Activated CD4-positive, alpha-beta T cell treated with anti-CD3 and anti-CD28 coated beads for 36 hours (primary cell): ENCODE measurements at regions of chr1 and their contacts with region 1.

Region 1: GRCh38 chr1:32817159-32817814 is at the starts of genes S100PBP and YARS1:
- DNase-seq: peak; percentile 100
- ATAC-seq: peak; percentile 96
- H3K4me3 Mint-ChIP-seq: peak within 1 kb of the TSS; percentile 97
- H3K27ac Mint-ChIP-seq: peak within 1 kb of the TSS; percentile 99
- H3K4me1 Mint-ChIP-seq: peaks cover 48% of the 10 kb centered on the region
- H3K27me3 Mint-ChIP-seq: no peaks in the 10 kb centered on the region
- total RNA-seq, gene S100PBP: 27.9 to 34.3 TPM
- total RNA-seq, gene YARS1: 259 to 309 TPM

Region 2: GRCh38 chr1:32013386-32014198 is 803.7 kb before region 1 on chr1 and contains the start of gene KHDRBS1:
- CTCF ChIA-PET with region 1: no interaction called
- POLR2A ChIA-PET with region 1: no interaction called
- intact Hi-C with region 1: loop called in 1 of 2 experiments (anchors 1 kb)
- DNase-seq: peak; percentile 99
- ATAC-seq: peak; percentile 90
- H3K4me3 Mint-ChIP-seq: peak within 1 kb of the TSS; percentile 97
- H3K27ac Mint-ChIP-seq: peak within 1 kb of the TSS; percentile 95
- H3K4me1 Mint-ChIP-seq: peaks cover 27% of the 10 kb centered on the region
- H3K27me3 Mint-ChIP-seq: no peaks in the 10 kb centered on the region
- total RNA-seq, gene KHDRBS1: 198 to 206 TPM

Region 3: DNA sequence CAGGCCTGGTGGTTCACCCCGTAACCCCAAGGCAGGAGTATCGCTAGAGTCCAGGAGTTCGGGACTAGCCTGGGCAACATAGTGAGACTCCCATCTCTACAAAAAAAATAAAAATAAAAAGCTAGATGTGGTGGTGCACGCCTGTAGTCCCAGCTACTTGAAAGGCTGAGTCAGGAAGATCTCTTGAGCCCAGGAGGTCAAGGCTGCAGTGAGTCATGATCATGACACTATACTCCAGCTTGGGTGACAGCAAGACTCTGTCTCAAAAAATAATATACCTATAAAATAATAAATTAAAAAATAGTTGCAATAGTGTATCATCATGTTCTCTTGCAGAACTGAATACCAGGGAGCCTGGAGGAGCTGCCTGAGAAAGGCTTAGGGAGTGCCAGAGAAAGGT is 764.4 kb before region 1 on chr1:
- CTCF ChIA-PET with region 1: no interaction called
- POLR2A ChIA-PET with region 1: no interaction called
- intact Hi-C with region 1: no loop called
- DNase-seq: no peak
- ATAC-seq: no peak
- H3K4me3 Mint-ChIP-seq: no peak overlapping the region
- H3K27ac Mint-ChIP-seq: no peak overlapping the region
- H3K4me1 Mint-ChIP-seq: peaks cover 4% of the 10 kb centered on the region
- H3K27me3 Mint-ChIP-seq: no peaks in the 10 kb centered on the region

Region 4: DNA sequence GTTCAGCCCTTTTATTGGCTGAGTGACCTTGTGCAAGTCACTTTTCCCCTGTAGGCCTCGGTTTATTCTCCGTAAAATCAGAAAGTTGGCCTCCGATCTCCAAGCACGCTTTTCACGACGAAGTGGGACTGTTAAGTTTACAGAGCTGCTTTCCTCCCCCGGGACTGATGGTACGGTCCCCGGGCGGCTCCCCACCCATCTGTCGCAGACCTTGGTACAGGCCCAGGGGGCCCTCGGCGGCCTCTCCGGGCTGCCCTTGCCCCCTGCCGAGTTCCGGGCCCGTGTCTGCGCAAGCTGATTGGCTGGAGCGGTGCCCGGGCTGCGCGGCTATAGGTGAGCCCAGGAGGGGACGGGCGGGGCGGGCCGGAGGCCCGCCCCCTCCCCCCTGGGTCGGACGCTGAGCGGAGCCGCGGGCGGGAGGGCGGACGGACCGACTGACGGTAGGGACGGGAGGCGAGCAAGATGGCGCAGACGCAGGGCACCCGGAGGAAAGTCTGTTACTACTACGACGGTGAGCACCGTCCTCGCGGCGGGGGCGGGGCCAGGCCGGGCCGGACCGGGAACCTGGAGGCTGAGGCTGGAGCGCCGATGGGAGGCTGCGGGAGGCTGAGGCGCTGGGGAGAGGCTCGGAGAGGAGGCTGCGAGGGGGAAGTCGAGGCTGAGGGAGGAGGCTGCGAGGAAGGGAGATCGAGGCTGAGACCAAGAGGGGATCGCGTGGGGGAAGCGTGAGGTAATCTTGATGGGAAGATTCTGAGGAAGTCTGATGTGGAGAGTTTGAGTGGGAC is 525.4 kb before region 1 on chr1 and contains the start of gene HDAC1:
- CTCF ChIA-PET with region 1: no interaction called
- POLR2A ChIA-PET with region 1: no interaction called
- intact Hi-C with region 1: loop called in 1 of 2 experiments (anchors 5 kb)
- DNase-seq: peak; percentile 99
- ATAC-seq: peak; percentile 98
- H3K4me3 Mint-ChIP-seq: peak within 1 kb of the TSS; percentile 100
- H3K27ac Mint-ChIP-seq: peak within 1 kb of the TSS; percentile 99
- H3K4me1 Mint-ChIP-seq: peaks cover 43% of the 10 kb centered on the region
- H3K27me3 Mint-ChIP-seq: no peaks in the 10 kb centered on the region
- total RNA-seq, gene HDAC1: 132 to 146 TPM

Region 5: GRCh38 chr1:32394141-32394889 is 423.0 kb before region 1 on chr1 and contains the start of gene BSDC1:
- CTCF ChIA-PET with region 1: no interaction called
- POLR2A ChIA-PET with region 1: no interaction called
- intact Hi-C with region 1: loop called in 1 of 2 experiments (anchors 1 kb)
- DNase-seq: peak; percentile 100
- ATAC-seq: peak; percentile 98
- H3K4me3 Mint-ChIP-seq: peak within 1 kb of the TSS; percentile 83
- H3K27ac Mint-ChIP-seq: peak within 1 kb of the TSS; percentile 98
- H3K4me1 Mint-ChIP-seq: peaks cover 19% of the 10 kb centered on the region
- H3K27me3 Mint-ChIP-seq: no peaks in the 10 kb centered on the region
- total RNA-seq, gene BSDC1: 29.4 to 36.9 TPM

Region 6: GRCh38 chr1:32964461-32965250 is 147.4 kb after region 1 on chr1 and contains the start of gene RNF19B:
- CTCF ChIA-PET with region 1: no interaction called
- POLR2A ChIA-PET with region 1: interaction called, 16 read pairs
- intact Hi-C with region 1: loop called in 1 of 2 experiments (anchors 1 kb)
- DNase-seq: peak; percentile 98
- ATAC-seq: peak; percentile 96
- H3K4me3 Mint-ChIP-seq: peak within 1 kb of the TSS; percentile 77
- H3K27ac Mint-ChIP-seq: peak within 1 kb of the TSS; percentile 84
- H3K4me1 Mint-ChIP-seq: peaks cover 59% of the 10 kb centered on the region
- H3K27me3 Mint-ChIP-seq: peaks cover 5% of the 10 kb centered on the region
- total RNA-seq, gene RNF19B: 22.5 to 23.9 TPM

Region 7: GRCh38 chr1:33127001-33127791 is 309.9 kb after region 1 on chr1:
- CTCF ChIA-PET with region 1: no interaction called
- POLR2A ChIA-PET with region 1: no interaction called
- intact Hi-C with region 1: loop called in 1 of 2 experiments (anchors 1 kb)
- DNase-seq: peak; percentile 99
- ATAC-seq: peak; percentile 95
- H3K4me3 Mint-ChIP-seq: peak overlapping the region; percentile 97
- H3K27ac Mint-ChIP-seq: peak overlapping the region; percentile 98
- H3K4me1 Mint-ChIP-seq: peaks cover 40% of the 10 kb centered on the region
- H3K27me3 Mint-ChIP-seq: no peaks in the 10 kb centered on the region

Region 8: GRCh38 chr1:33430692-33431593 is 613.7 kb after region 1 on chr1 and contains the start of gene PHC2:
- CTCF ChIA-PET with region 1: interaction called, 3 read pairs
- POLR2A ChIA-PET with region 1: no interaction called
- intact Hi-C with region 1: loop called in 1 of 2 experiments (anchors 2 kb)
- DNase-seq: peak; percentile 95
- ATAC-seq: peak; percentile 99
- H3K4me3 Mint-ChIP-seq: peak within 1 kb of the TSS; percentile 58
- H3K27ac Mint-ChIP-seq: no peak within 1 kb of the TSS
- H3K4me1 Mint-ChIP-seq: peaks cover 5% of the 10 kb centered on the region
- H3K27me3 Mint-ChIP-seq: peaks cover 5% of the 10 kb centered on the region
- total RNA-seq, gene PHC2: 23.8 to 28.4 TPM